CD4-positive, alpha-beta memory T cell (primary cell): ENCODE measurements at regions of chr7 and their contacts with region 1.

Region 1: DNA sequence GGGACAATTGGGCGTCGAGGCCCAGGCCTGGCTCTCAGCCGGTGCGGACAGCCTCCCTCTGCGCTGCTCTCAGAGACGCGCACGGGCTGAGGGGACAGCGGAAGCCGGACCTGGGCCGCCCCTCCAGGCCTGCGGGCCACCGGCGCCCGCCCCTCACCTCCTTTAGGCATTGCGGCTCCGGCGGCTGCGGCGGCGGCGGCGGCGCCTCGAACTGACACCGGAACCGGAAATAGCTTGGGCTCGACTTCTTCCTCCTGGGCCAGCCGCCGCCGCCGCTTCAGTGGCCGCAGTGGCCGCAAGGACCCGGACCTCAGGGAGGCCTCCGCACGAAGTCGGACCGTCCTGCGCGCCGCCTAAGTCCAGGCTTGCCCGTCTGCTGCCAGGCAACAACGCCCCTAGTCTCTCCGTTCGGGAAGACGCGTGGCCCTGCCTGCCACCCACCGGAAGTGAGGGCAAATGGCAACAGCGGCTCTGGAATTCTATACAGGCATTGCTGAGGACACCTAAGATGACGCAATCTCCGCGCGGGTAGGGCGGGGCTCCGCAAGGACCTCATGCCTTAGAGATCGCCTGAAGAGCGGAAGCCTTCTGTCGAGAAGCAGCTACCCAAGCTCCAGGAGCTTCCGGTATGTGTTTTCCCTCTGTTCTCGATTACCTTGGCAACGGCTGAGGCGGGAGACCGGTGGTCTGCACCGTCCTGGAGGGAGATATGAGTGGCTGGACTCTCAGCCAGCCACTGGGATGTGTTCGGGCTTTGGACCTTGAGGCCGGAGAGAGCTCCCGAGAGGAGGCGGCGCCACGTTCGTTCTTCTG is at the starts of genes BUD31 and PDAP1:
- DNase-seq: peak; percentile 96 to 100 (median 98)
- H3K4me3 ChIP-seq: peak within 1 kb of the TSS; percentile 94 to 97
- H3K4me3 Mint-ChIP-seq: peak within 1 kb of the TSS; percentile 94 to 99 (median 96)
- H3K27ac ChIP-seq: peak within 1 kb of the TSS; percentile 93
- H3K27ac Mint-ChIP-seq: peak within 1 kb of the TSS; percentile 88 to 100 (median 98)
- H3K4me1 ChIP-seq: peaks cover 45% of the 10 kb centered on the region
- H3K4me1 Mint-ChIP-seq: peaks cover 29 to 61% (median 48%) of the 10 kb centered on the region in 4 donors
- H3K27me3 ChIP-seq: no peaks in the 10 kb centered on the region
- H3K27me3 Mint-ChIP-seq: no peaks in the 10 kb centered on the region
- total RNA-seq, gene BUD31: 60.0 to 61.3 TPM
- total RNA-seq, gene PDAP1: 66.0 to 67.0 TPM

Region 2: DNA sequence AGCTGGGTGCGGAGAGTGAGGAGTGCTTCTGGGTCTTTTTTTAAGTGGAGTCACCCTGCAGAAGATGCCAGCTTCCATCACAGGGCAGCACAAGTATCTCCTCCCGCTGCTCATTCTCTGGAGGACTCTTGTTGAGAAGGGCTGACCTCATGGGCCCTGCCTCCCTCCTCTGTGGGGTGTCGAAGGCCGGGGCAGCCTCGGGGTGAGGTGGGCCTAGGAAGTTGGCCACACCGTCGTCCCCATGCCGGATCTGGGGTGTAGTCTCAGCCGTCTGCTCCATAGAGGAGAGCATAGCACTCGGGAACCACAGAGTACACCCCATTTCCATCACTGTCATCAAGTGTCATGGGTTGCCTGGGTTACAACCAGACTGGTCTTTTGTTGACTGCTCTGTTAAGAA is 445.3 kb before region 1 on chr7:
- CTCF ChIA-PET with region 1: no interaction called
- POLR2A ChIA-PET with region 1: no interaction called
- intact Hi-C with region 1: no loop called
- DNase-seq: no peak
- H3K4me3 ChIP-seq: no peak overlapping the region
- H3K4me3 Mint-ChIP-seq: no peak overlapping the region
- H3K27ac ChIP-seq: no peak overlapping the region
- H3K27ac Mint-ChIP-seq: no peak overlapping the region
- H3K4me1 ChIP-seq: no peaks in the 10 kb centered on the region
- H3K4me1 Mint-ChIP-seq: peaks cover 0 to 3% (median 0%) of the 10 kb centered on the region in 4 donors
- H3K27me3 ChIP-seq: no peaks in the 10 kb centered on the region
- H3K27me3 Mint-ChIP-seq: no peaks in the 10 kb centered on the region

Region 3: DNA sequence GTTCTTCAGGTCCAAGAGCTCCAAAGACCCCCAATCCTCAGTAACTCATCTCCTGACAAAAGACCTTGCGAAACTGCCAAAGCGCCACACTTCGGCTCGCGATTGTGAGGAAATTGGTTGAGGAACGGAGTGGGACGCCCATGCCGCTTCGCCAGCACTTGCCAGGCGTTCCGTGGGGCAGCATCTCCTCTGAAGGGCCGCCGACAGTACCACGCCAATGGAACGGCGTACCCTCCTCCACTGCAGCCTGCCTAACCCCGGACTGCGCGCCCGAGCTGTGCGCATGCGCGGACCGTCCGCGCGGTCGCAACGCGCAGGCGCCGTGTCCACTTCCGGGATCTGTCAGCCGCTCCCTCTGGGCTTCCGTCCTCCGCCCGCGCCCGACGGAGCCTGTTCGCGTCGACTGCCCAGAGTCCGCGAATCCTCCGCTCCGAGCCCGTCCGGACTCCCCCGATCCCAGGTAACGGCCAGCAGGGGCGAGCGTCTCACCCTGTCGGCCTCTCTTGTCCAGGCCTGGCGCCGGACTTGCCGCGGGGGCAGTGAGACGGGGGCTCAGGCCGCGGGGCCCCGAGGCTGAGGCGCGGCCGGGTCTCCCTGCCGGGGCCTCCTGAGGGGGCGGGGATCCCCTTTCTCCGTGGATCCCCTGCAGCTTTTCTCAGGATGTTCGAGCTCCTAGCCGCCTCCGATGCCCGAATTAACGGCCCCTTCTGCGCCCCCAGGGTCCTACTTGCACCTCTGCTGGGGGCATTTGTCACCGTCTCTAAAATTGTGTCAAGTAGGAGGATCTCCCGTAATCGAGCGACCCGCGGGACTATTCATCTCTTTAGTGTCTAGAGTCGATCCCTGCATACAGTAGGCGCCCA is 82.8 kb before region 1 on chr7 and contains the start of gene ARPC1A:
- CTCF ChIA-PET with region 1: interaction called, 5 read pairs
- POLR2A ChIA-PET with region 1: interaction called, 15 read pairs
- intact Hi-C with region 1: loop called (anchors 1 kb)
- DNase-seq: peak; percentile 86 to 93 (median 92)
- H3K4me3 ChIP-seq: peak within 1 kb of the TSS; percentile 36 to 99
- H3K4me3 Mint-ChIP-seq: peak within 1 kb of the TSS; percentile 86 to 95 (median 90)
- H3K27ac ChIP-seq: peak within 1 kb of the TSS; percentile 96
- H3K27ac Mint-ChIP-seq: peak within 1 kb of the TSS; percentile 89 to 97 (median 94)
- H3K4me1 ChIP-seq: peaks cover 49% of the 10 kb centered on the region
- H3K4me1 Mint-ChIP-seq: peaks cover 28 to 45% (median 35%) of the 10 kb centered on the region in 4 donors
- H3K27me3 ChIP-seq: no peaks in the 10 kb centered on the region
- H3K27me3 Mint-ChIP-seq: no peaks in the 10 kb centered on the region
- total RNA-seq, gene ARPC1A: 46.2 to 51.5 TPM

Region 4: GRCh38 chr7:99374103-99375064 is 34.2 kb before region 1 on chr7 and contains the start of gene ARPC1B:
- CTCF ChIA-PET with region 1: interaction called, 5 read pairs
- POLR2A ChIA-PET with region 1: interaction called, 130 read pairs
- intact Hi-C with region 1: loop called (anchors 1 kb)
- DNase-seq: peak; percentile 81 to 88 (median 81)
- H3K4me3 ChIP-seq: peak within 1 kb of the TSS; percentile 73 to 82
- H3K4me3 Mint-ChIP-seq: peak within 1 kb of the TSS; percentile 79 to 87 (median 81)
- H3K27ac ChIP-seq: peak within 1 kb of the TSS; percentile 87
- H3K27ac Mint-ChIP-seq: peak within 1 kb of the TSS; percentile 87 to 100 (median 98)
- H3K4me1 ChIP-seq: peaks cover 44% of the 10 kb centered on the region
- H3K4me1 Mint-ChIP-seq: peaks cover 13 to 42% (median 25%) of the 10 kb centered on the region in 4 donors
- H3K27me3 ChIP-seq: no peaks in the 10 kb centered on the region
- H3K27me3 Mint-ChIP-seq: no peaks in the 10 kb centered on the region
- total RNA-seq, gene ARPC1B: 188 to 191 TPM

Region 5: DNA sequence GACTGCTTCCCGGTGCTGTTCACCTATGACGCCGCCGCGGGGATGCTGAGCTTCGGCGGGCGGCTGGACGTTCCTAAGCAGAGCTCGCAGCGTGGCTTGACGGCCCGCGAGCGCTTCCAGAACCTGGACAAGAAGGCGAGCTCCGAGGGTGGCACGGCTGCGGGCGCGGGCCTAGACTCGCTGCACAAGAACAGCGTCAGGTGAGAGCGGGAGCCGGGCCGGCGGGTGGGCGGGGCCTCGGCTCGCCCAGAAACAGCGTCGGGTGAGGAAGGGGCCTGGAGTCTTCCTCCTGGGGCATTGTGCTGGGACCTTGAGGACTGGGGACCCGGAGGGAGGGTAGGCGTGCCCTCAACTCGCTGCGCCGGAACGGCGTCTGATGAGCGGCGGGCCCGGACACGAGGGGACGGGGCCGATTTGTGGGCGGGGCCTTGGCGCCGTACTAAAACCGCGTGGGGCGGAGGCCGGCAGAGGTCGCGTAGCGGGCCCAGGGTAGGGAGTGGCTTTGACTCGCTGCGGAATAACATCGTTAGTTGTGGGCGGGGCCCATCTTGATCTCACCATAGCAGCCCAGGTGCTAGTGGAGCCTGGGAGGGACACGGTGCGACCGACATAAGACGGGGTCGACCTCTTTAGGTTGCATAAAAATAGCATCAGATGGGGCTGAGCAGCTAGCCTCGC is 15.8 kb before region 1 on chr7:
- CTCF ChIA-PET with region 1: interaction called, 28 read pairs
- POLR2A ChIA-PET with region 1: interaction called, 210 read pairs
- intact Hi-C with region 1: loop called (anchors 1 kb)
- DNase-seq: peak; percentile 85 to 92 (median 87)
- H3K4me3 ChIP-seq: peak overlapping the region in 1 of 2 donors; percentile 52
- H3K4me3 Mint-ChIP-seq: peak overlapping the region; percentile 80 to 91 (median 84)
- H3K27ac ChIP-seq: peak overlapping the region; percentile 60
- H3K27ac Mint-ChIP-seq: peak overlapping the region; percentile 92 to 97 (median 94)
- H3K4me1 ChIP-seq: peaks cover 22% of the 10 kb centered on the region
- H3K4me1 Mint-ChIP-seq: peaks cover 6 to 26% (median 18%) of the 10 kb centered on the region in 4 donors
- H3K27me3 ChIP-seq: no peaks in the 10 kb centered on the region
- H3K27me3 Mint-ChIP-seq: no peaks in the 10 kb centered on the region

Region 6: DNA sequence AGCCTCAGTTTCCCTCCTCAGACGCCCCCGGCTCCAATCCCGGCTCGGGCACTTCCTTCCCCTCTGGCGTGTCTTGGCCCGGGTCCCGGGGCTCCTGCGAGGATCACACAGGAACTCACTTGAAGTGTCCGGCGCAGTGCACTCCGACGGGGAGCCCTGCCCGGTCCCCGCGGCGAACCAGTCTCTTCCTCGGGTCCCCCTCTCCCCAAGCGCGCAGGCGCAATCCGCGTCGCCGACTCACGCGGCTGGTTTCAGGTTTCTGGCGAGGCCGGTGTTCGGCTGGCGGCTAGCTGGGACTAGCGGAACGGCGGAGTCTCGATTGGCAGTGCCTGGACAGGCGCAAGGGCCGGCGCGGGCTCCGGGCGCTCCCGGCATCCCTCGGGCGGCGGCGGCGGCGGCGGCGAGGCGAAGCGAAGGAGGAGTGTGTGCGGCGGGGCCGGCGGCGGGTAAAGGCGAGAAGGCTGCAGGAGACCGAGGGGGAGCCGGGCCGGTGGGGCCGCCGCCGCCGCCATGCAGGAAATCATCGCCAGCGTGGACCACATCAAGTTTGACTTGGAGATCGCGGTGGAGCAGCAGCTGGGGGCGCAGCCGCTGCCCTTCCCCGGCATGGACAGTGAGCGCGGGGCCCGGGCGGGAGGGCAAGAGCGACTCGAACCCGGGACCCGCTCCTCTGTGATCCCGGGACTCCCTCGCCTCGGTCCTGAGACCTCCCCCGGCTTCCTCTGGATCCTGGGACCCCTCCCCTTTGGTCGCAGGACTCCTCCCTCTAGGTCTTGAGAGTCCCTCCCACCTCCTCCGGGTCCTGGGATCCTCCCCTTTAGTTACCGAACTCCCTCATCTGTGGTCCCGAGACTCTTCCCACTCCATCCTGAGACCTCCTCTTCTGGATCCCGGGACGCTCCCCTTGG is 30.2 kb after region 1 on chr7 and contains the starts of genes CPSF4 and PTCD1:
- CTCF ChIA-PET with region 1: interaction called, 5 read pairs
- POLR2A ChIA-PET with region 1: interaction called, 25 read pairs
- intact Hi-C with region 1: loop called (anchors 1 kb)
- DNase-seq: peak; percentile 84 to 87 (median 84)
- H3K4me3 ChIP-seq: peak within 1 kb of the TSS; percentile 77 to 93
- H3K4me3 Mint-ChIP-seq: peak within 1 kb of the TSS; percentile 95 to 98 (median 97)
- H3K27ac ChIP-seq: peak within 1 kb of the TSS; percentile 61
- H3K27ac Mint-ChIP-seq: peak within 1 kb of the TSS; percentile 91 to 96 (median 95)
- H3K4me1 ChIP-seq: peaks cover 17% of the 10 kb centered on the region
- H3K4me1 Mint-ChIP-seq: peaks cover 15 to 40% (median 30%) of the 10 kb centered on the region in 4 donors
- H3K27me3 ChIP-seq: no peaks in the 10 kb centered on the region
- H3K27me3 Mint-ChIP-seq: no peaks in the 10 kb centered on the region
- total RNA-seq, gene CPSF4: 49.2 to 54.7 TPM
- total RNA-seq, gene PTCD1: 7.4 to 7.7 TPM

Region 7: GRCh38 chr7:99472561-99473243 is 64.1 kb after region 1 on chr7 and contains the start of gene ZNF789:
- CTCF ChIA-PET with region 1: interaction called, 5 read pairs
- POLR2A ChIA-PET with region 1: interaction called, 5 read pairs
- intact Hi-C with region 1: loop called (anchors 2 kb)
- DNase-seq: peak; percentile 94 to 99 (median 95)
- H3K4me3 ChIP-seq: peak within 1 kb of the TSS; percentile 90 to 93
- H3K4me3 Mint-ChIP-seq: peak within 1 kb of the TSS; percentile 92 to 99 (median 96)
- H3K27ac ChIP-seq: peak within 1 kb of the TSS; percentile 80
- H3K27ac Mint-ChIP-seq: peak within 1 kb of the TSS; percentile 90 to 98 (median 95)
- H3K4me1 ChIP-seq: peaks cover 14% of the 10 kb centered on the region
- H3K4me1 Mint-ChIP-seq: peaks cover 17 to 49% (median 31%) of the 10 kb centered on the region in 4 donors
- H3K27me3 ChIP-seq: no peaks in the 10 kb centered on the region
- H3K27me3 Mint-ChIP-seq: no peaks in the 10 kb centered on the region
- total RNA-seq, gene ZNF789: 20.8 to 21.2 TPM

Region 8: GRCh38 chr7:99558306-99559174 is 150.0 kb after region 1 on chr7 and contains the start of gene ZNF655:
- CTCF ChIA-PET with region 1: interaction called, 3 read pairs
- POLR2A ChIA-PET with region 1: interaction called, 34 read pairs
- intact Hi-C with region 1: loop called (anchors 1 kb)
- DNase-seq: peak; percentile 92 to 95 (median 92)
- H3K4me3 ChIP-seq: peak within 1 kb of the TSS; percentile 76 to 97
- H3K4me3 Mint-ChIP-seq: peak within 1 kb of the TSS; percentile 91 to 100 (median 98)
- H3K27ac ChIP-seq: peak within 1 kb of the TSS; percentile 98
- H3K27ac Mint-ChIP-seq: peak within 1 kb of the TSS; percentile 96 to 99 (median 99)
- H3K4me1 ChIP-seq: peaks cover 43% of the 10 kb centered on the region
- H3K4me1 Mint-ChIP-seq: peaks cover 27 to 56% (median 42%) of the 10 kb centered on the region in 4 donors
- H3K27me3 ChIP-seq: no peaks in the 10 kb centered on the region
- H3K27me3 Mint-ChIP-seq: no peaks in the 10 kb centered on the region
- total RNA-seq, gene ZNF655: 137 to 150 TPM